CD4-positive, alpha-beta T cell (primary cell): ENCODE measurements at regions of chr2 and their contacts with region 1.

Region 1: DNA sequence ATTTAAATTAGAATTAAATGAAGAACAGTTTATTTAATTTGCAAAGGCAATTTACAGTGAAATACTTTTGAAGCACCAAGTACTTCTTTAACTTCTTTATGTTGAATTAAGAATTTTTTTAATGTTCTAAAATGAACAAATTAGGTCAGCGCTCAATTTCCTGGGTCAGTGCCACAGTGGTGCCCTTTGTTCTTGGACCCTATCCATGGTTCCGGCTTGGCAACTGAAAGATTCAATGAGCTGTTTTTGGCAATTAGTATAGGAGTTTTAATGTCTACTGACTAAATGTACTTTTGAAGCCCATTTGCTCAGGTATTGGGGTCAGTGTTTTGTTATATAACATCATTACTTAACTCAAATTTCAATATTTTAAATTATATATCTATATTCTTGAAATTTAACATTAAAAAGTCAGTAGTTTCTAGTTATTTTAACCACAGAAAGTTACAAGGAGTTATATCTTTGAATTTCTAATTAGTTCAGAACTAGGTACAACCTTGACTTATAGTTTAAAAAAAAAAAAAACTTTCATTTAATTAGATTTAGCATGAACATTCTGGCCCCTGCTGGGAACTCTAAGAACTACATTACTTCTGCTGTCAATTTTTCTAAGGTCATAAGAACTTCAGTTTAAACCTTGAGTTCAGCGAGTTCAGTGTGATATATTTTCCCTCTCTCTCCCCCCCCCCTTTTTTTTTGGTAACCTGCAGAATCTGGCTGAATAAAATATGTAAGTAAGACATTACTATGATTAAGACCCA is 7.6 kb upstream of the MSTN start:
- DNase-seq: peak in 5 of 14 experiments; percentile 3 to 65 (median 58)
- ATAC-seq: peak; percentile 49
- H3K4me3 ChIP-seq: no peak overlapping the region
- H3K4me3 Mint-ChIP-seq: no peak overlapping the region
- H3K27ac ChIP-seq: no peak overlapping the region
- H3K27ac Mint-ChIP-seq: no peak overlapping the region
- H3K4me1 ChIP-seq: no peaks in the 10 kb centered on the region
- H3K4me1 Mint-ChIP-seq: no peaks in the 10 kb centered on the region
- H3K27me3 ChIP-seq: no peaks in the 10 kb centered on the region
- H3K27me3 Mint-ChIP-seq: peaks cover 4% of the 10 kb centered on the region
- CTCF ChIP-seq: peak; percentile 41

Region 2: DNA sequence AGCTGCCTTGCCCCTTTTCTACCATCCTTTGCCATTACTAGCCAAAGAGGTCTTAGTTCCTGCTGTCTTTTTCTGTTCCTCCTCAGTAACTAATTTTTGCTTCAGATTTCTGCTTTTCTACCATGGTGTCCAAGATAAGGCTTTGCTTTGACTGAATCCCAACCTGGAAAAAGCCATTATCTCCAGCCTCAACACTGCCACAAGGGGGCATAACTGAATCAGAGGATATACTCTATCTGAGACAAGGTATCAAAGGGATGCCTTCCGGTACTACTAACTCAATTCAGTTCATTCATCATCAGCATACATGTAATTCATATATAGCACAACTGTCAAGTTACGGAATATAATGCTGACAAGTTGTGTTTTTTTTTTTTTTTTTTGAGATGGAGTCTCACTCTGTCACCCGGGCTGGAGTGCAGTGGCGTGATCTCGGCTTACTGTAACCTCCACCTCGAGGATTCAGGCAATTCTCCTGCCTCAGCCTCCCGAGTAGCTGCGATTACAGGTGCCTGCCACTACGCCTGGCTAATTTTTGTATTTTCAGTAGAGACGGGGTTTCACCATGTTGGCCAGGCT is 318.9 kb before region 1 on chr2:
- CTCF ChIA-PET with region 1: no interaction called
- POLR2A ChIA-PET with region 1: no interaction called
- intact Hi-C with region 1: loop called (anchors 1 to 2 kb)
- DNase-seq: peak in 11 of 14 experiments; percentile 3 to 70 (median 24)
- ATAC-seq: peak; percentile 87
- H3K4me3 ChIP-seq: no peak overlapping the region
- H3K4me3 Mint-ChIP-seq: no peak overlapping the region
- H3K27ac ChIP-seq: no peak overlapping the region
- H3K27ac Mint-ChIP-seq: peak overlapping the region; percentile 0
- H3K4me1 ChIP-seq: no peaks in the 10 kb centered on the region
- H3K4me1 Mint-ChIP-seq: no peaks in the 10 kb centered on the region
- H3K27me3 ChIP-seq: no peaks in the 10 kb centered on the region
- H3K27me3 Mint-ChIP-seq: no peaks in the 10 kb centered on the region
- CTCF ChIP-seq: peak; percentile 53

Region 3: GRCh38 chr2:190105554-190105953 is 35.4 kb after region 1 on chr2:
- CTCF ChIA-PET with region 1: no interaction called
- POLR2A ChIA-PET with region 1: no interaction called
- intact Hi-C with region 1: no loop called
- DNase-seq: no peak
- ATAC-seq: no peak
- H3K4me3 ChIP-seq: no peak overlapping the region
- H3K4me3 Mint-ChIP-seq: no peak overlapping the region
- H3K27ac ChIP-seq: no peak overlapping the region
- H3K27ac Mint-ChIP-seq: no peak overlapping the region
- H3K4me1 ChIP-seq: no peaks in the 10 kb centered on the region
- H3K4me1 Mint-ChIP-seq: no peaks in the 10 kb centered on the region
- H3K27me3 ChIP-seq: no peaks in the 10 kb centered on the region
- H3K27me3 Mint-ChIP-seq: peaks cover 7% of the 10 kb centered on the region
- CTCF ChIP-seq: no peak